ENCODE measurements at regions of chr2 and their contacts with region 1.

Region 1: DNA sequence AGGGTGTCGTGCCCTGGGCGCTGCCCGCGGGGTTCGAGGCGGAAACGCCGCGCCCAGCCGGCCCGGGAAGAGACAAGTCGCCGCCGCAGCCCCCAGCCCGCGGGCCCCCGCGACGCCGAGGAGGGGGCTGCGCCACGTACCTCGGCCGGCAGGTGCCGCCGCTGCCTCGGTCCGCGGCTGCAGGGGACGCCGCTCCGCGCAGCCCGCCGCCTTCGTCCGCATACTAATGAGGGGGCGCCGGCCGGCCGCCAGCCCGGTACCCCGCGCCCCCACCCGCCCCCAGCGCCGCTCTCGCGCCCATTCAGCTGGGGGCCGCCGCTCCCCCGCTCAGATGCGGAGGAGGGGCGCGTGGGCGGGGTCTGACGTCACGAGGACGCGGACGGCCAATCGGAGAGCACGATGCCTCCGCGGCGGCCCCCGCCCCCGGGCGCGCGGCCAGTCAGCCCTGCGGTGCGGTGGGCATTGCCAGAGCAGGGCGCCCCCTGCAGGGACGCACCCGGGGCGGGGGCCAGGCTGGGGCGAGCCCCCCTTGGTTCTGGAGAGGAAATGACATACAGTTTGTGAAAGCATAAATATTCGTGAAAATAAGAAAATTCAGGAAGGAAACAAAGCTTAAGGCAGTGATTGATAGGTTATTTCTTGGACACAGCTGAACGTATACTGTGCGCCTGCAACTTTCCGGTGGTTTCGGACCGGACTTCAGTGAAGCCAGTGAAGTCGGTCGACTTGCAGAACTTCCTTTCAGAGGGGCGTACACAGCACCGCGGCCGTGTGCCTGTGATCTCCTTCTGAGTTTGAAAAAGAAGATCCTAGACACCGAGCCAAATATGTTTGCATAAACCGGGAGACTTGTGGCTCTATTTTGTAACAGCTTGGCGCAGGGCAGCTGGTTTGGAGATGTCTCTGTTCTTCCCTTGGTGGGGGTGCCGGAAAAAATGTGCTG is at the start of gene ST3GAL5:
- DNase-seq: peak; percentile 89 to 94 (median 92)
- H3K4me3 ChIP-seq: peak within 1 kb of the TSS; percentile 87 to 96
- H3K4me3 Mint-ChIP-seq: peak within 1 kb of the TSS; percentile 94 to 98 (median 94)
- H3K27ac ChIP-seq: peak within 1 kb of the TSS; percentile 69
- H3K27ac Mint-ChIP-seq: peak within 1 kb of the TSS; percentile 94 to 99 (median 96)
- H3K4me1 ChIP-seq: peaks cover 48% of the 10 kb centered on the region
- H3K4me1 Mint-ChIP-seq: peaks cover 43 to 78% (median 58%) of the 10 kb centered on the region in 4 donors
- H3K27me3 ChIP-seq: no peaks in the 10 kb centered on the region
- H3K27me3 Mint-ChIP-seq: no peaks in the 10 kb centered on the region
- total RNA-seq, gene ST3GAL5: 37.1 to 41.7 TPM

Region 2: DNA sequence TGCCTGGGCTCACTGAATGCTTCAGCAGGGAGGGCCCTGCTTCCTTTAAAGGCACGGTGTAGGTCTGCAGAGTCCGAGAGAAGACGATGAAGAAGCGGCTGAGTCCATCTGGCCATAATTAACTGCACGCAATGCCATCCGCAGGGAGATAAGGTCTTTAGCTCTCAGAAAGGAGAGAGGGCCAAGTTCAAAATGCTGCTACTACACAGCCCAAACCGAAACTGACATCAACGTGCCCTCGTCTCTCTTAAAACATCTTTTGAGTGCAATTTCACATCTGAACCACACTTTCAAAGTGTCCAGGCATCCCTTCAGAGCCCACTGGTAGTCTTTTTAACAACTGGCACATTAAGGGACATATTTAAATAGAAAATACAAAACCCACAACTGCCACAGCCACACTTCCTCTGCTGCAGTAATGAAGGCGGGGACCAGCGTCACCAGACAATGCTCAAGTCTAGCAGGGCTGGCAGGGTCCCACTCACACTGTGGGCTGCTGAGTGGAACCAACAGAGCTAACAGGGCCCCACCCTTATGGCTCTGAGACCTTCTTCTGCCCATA is 35.9 kb before region 1 on chr2:
- CTCF ChIA-PET with region 1: interaction called, 96 read pairs
- POLR2A ChIA-PET with region 1: interaction called, 140 read pairs
- intact Hi-C with region 1: loop called (anchors 1 kb)
- DNase-seq: peak; percentile 73 to 88 (median 74)
- H3K4me3 ChIP-seq: peak overlapping the region; percentile 34 to 48
- H3K4me3 Mint-ChIP-seq: peak overlapping the region; percentile 82 to 92 (median 86)
- H3K27ac ChIP-seq: peak overlapping the region; percentile 84
- H3K27ac Mint-ChIP-seq: peak overlapping the region; percentile 98 to 100 (median 100)
- H3K4me1 ChIP-seq: peaks cover 81% of the 10 kb centered on the region
- H3K4me1 Mint-ChIP-seq: peaks cover 67 to 87% (median 76%) of the 10 kb centered on the region in 4 donors
- H3K27me3 ChIP-seq: no peaks in the 10 kb centered on the region
- H3K27me3 Mint-ChIP-seq: no peaks in the 10 kb centered on the region

Region 3: GRCh38 chr2:85865539-85866164 is 23.3 kb before region 1 on chr2:
- CTCF ChIA-PET with region 1: interaction called, 76 read pairs
- POLR2A ChIA-PET with region 1: interaction called, 15 read pairs
- intact Hi-C with region 1: no loop called
- DNase-seq: peak in 1 of 5 donors; percentile 44
- H3K4me3 ChIP-seq: no peak overlapping the region
- H3K4me3 Mint-ChIP-seq: peak overlapping the region in 7 of 8 donors; percentile 14 to 64 (median 48)
- H3K27ac ChIP-seq: peak overlapping the region; percentile 13
- H3K27ac Mint-ChIP-seq: peak overlapping the region; percentile 55 to 89 (median 79)
- H3K4me1 ChIP-seq: peaks cover 55% of the 10 kb centered on the region
- H3K4me1 Mint-ChIP-seq: peaks cover 46 to 85% (median 63%) of the 10 kb centered on the region in 4 donors
- H3K27me3 ChIP-seq: no peaks in the 10 kb centered on the region
- H3K27me3 Mint-ChIP-seq: no peaks in the 10 kb centered on the region

Region 4: GRCh38 chr2:85878719-85879385 is 10.1 kb before region 1 on chr2:
- CTCF ChIA-PET with region 1: interaction called, 43 read pairs
- POLR2A ChIA-PET with region 1: interaction called, 21 read pairs
- intact Hi-C with region 1: loop called (anchors 1 kb)
- DNase-seq: no peak
- H3K4me3 ChIP-seq: no peak overlapping the region
- H3K4me3 Mint-ChIP-seq: peak overlapping the region; percentile 3 to 80 (median 52)
- H3K27ac ChIP-seq: no peak overlapping the region
- H3K27ac Mint-ChIP-seq: peak overlapping the region in 6 of 7 donors; percentile 37 to 92 (median 70)
- H3K4me1 ChIP-seq: peaks cover 24% of the 10 kb centered on the region
- H3K4me1 Mint-ChIP-seq: peaks cover 46 to 82% (median 66%) of the 10 kb centered on the region in 4 donors
- H3K27me3 ChIP-seq: no peaks in the 10 kb centered on the region
- H3K27me3 Mint-ChIP-seq: no peaks in the 10 kb centered on the region

Region 5: GRCh38 chr2:85999061-85999831 is 110.3 kb after region 1 on chr2:
- CTCF ChIA-PET with region 1: interaction called, 11 read pairs
- POLR2A ChIA-PET with region 1: interaction called, 4 read pairs
- intact Hi-C with region 1: no loop called
- DNase-seq: peak; percentile 29 to 46 (median 38)
- H3K4me3 ChIP-seq: peak overlapping the region in 1 of 2 donors; percentile 8
- H3K4me3 Mint-ChIP-seq: peak overlapping the region in 7 of 8 donors; percentile 54 to 71 (median 63)
- H3K27ac ChIP-seq: peak overlapping the region; percentile 34
- H3K27ac Mint-ChIP-seq: peak overlapping the region; percentile 42 to 95 (median 88)
- H3K4me1 ChIP-seq: peaks cover 65% of the 10 kb centered on the region
- H3K4me1 Mint-ChIP-seq: peaks cover 20 to 61% (median 37%) of the 10 kb centered on the region in 4 donors
- H3K27me3 ChIP-seq: no peaks in the 10 kb centered on the region
- H3K27me3 Mint-ChIP-seq: no peaks in the 10 kb centered on the region

Region 6: GRCh38 chr2:86068136-86068588 is 179.2 kb after region 1 on chr2:
- CTCF ChIA-PET with region 1: interaction called, 7 read pairs
- POLR2A ChIA-PET with region 1: interaction called, 17 read pairs
- intact Hi-C with region 1: no loop called
- DNase-seq: peak; percentile 25 to 72 (median 33)
- H3K4me3 ChIP-seq: no peak overlapping the region
- H3K4me3 Mint-ChIP-seq: peak overlapping the region in 3 of 8 donors; percentile 8 to 60 (median 56)
- H3K27ac ChIP-seq: no peak overlapping the region
- H3K27ac Mint-ChIP-seq: peak overlapping the region in 6 of 7 donors; percentile 19 to 72 (median 49)
- H3K4me1 ChIP-seq: peaks cover 18% of the 10 kb centered on the region
- H3K4me1 Mint-ChIP-seq: peaks cover 9 to 21% (median 12%) of the 10 kb centered on the region in 4 donors
- H3K27me3 ChIP-seq: no peaks in the 10 kb centered on the region
- H3K27me3 Mint-ChIP-seq: no peaks in the 10 kb centered on the region

Region 7: GRCh38 chr2:86105252-86105968 is 216.5 kb after region 1 on chr2 and contains the start of gene POLR1A:
- CTCF ChIA-PET with region 1: interaction called, 8 read pairs
- POLR2A ChIA-PET with region 1: interaction called, 24 read pairs
- intact Hi-C with region 1: loop called (anchors 1 kb)
- DNase-seq: peak; percentile 88 to 91 (median 90)
- H3K4me3 ChIP-seq: peak within 1 kb of the TSS; percentile 73 to 83
- H3K4me3 Mint-ChIP-seq: peak within 1 kb of the TSS; percentile 88 to 96 (median 92)
- H3K27ac ChIP-seq: peak within 1 kb of the TSS; percentile 82
- H3K27ac Mint-ChIP-seq: peak within 1 kb of the TSS; percentile 93 to 100 (median 99)
- H3K4me1 ChIP-seq: peaks cover 34% of the 10 kb centered on the region
- H3K4me1 Mint-ChIP-seq: peaks cover 47 to 79% (median 61%) of the 10 kb centered on the region in 4 donors
- H3K27me3 ChIP-seq: no peaks in the 10 kb centered on the region
- H3K27me3 Mint-ChIP-seq: no peaks in the 10 kb centered on the region
- total RNA-seq, gene POLR1A: 23.4 to 25.8 TPM

Measured in CD4-positive, alpha-beta memory T cell (primary cell).